Left ventricle myocardium inferior (tissue), 1 donor: ENCODE measurements at regions of chr11 and their contacts with region 1.

Region 1: GRCh38 chr11:72722050-72722748 is 30.0 kb downstream of the ARAP1 start:
- DNase-seq: peak; percentile 88
- H3K4me3 ChIP-seq: peak overlapping the region; percentile 73
- H3K27ac ChIP-seq: peak overlapping the region; percentile 93
- H3K4me1 ChIP-seq: peaks cover 71% of the 10 kb centered on the region
- H3K27me3 ChIP-seq: no peaks in the 10 kb centered on the region
- CTCF ChIP-seq: no peak

Region 2: GRCh38 chr11:72793425-72794367 is 71.5 kb after region 1 on chr11 and contains the start of gene STARD10:
- intact Hi-C with region 1: loop called (anchors 5 kb)
- DNase-seq: peak; percentile 95
- H3K4me3 ChIP-seq: peak within 1 kb of the TSS; percentile 79
- H3K27ac ChIP-seq: peak within 1 kb of the TSS; percentile 97
- H3K4me1 ChIP-seq: peaks cover 41% of the 10 kb centered on the region
- H3K27me3 ChIP-seq: no peaks in the 10 kb centered on the region
- CTCF ChIP-seq: peak; percentile 97
- total RNA-seq, gene STARD10: 93.6 TPM

Region 3: GRCh38 chr11:73012121-73012863 is 290.1 kb after region 1 on chr11:
- intact Hi-C with region 1: no loop called
- DNase-seq: no peak
- H3K4me3 ChIP-seq: no peak overlapping the region
- H3K27ac ChIP-seq: no peak overlapping the region
- H3K4me1 ChIP-seq: peaks cover 25% of the 10 kb centered on the region
- H3K27me3 ChIP-seq: no peaks in the 10 kb centered on the region
- CTCF ChIP-seq: no peak

Region 4: GRCh38 chr11:73184953-73185671 is 462.9 kb after region 1 on chr11:
- intact Hi-C with region 1: loop called (anchors 10 kb)
- DNase-seq: peak; percentile 68
- H3K4me3 ChIP-seq: no peak overlapping the region
- H3K27ac ChIP-seq: peak overlapping the region; percentile 21
- H3K4me1 ChIP-seq: peaks cover 66% of the 10 kb centered on the region
- H3K27me3 ChIP-seq: no peaks in the 10 kb centered on the region
- CTCF ChIP-seq: peak; percentile 92